Endothelial cell of umbilical vein (primary cell): ENCODE measurements at regions of chr14 and their contacts with region 1.

Region 1: DNA sequence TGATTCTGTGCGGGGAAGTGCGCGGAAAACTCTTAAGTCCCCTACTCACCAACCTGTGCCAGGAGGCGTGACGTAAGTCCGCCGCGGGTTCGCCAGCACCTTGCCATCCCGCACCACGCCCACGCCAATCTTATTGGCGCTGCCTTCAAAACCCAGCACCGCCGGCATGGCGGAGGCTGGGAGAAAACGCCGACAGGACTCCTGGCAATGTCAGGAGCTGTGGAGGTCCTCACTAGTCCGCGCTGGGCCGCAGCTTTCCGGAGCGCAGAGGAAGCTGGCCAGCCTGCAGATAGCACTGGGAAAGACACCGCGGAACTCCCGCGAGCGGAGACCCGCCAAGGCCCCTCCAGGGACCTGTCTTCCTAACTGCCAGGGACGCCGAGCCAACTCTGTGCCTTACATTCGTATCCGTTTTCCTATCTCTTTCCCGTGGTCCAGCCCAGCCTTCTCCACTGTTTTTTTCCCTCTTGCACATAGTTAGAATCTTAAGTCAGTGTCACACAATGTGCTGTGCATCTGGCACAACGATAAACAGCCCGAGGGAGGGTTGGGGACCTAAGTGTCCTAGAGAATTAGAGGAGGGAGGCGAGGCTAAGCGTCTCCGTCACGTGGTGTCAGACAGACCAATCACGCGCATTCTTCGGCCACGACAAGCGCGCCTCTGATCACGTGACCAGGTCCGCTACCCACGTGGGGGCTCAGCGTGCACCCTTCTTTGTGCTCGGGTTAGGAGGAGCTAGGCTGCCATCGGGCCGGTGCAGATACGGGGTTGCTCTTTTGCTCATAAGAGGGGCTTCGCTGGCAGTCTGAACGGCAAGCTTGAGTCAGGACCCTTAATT is at the starts of genes APEX1 and OSGEP:
- DNase-seq: peak; percentile 99
- H3K4me3 ChIP-seq: peak within 1 kb of the TSS; percentile 85 to 99 (median 90)
- H3K27ac ChIP-seq: peak within 1 kb of the TSS; percentile 96
- H3K4me1 ChIP-seq: peaks cover 15% of the 10 kb centered on the region
- H3K27me3 ChIP-seq: no peaks in the 10 kb centered on the region
- CTCF ChIP-seq: no peak
- POLR2A ChIP-seq: peak; percentile 78
- total RNA-seq, gene APEX1: 227 and 231 TPM in 2 replicates
- total RNA-seq, gene OSGEP: 39.1 and 41.8 TPM in 2 replicates

Region 2: DNA sequence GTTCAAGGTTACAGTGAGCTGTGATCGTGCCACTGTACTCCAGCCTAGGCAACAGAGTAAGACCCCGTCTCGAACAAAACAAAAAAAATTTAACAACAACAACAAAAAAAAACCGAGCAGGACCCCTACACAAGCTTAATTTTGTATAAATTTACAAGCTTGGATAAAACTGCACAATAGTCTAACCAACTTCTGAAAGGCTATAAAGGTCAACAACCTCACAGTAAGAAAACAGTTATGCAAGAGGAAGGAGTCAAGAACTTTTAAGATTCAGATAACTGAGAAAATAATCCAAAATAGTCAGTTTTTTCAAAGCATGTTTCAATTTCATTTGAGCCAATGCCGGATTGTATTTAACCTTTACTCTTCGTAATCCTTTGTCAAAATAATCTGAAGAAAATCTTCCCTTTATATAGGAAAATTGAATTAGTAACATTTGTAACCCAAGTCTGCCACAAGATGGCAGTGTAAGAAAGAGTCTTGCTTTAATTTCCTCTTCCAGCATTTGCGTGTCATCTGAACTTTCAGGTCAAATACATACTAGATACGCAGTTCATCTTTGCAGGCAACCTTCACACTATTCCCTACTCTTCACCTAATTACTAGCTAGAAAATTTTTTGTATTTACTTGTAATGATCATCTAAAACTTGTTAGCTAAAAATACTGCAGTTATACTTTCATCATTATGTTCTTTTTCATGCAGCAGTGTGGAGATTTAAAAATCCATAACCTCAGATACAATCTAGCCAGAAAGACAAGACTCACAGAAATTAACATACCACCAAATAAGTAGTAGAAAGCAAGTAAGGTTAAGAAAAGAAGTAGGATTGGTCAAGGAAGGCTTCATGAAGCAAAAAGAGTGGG is 127.5 kb before region 1 on chr14:
- CTCF ChIA-PET with region 1: interaction called, 9 read pairs
- POLR2A ChIA-PET with region 1: no interaction called
- dilution Hi-C with region 1: no loop called
- intact Hi-C with region 1: loop called (anchors 1 kb)
- DNase-seq: peak; percentile 75
- H3K4me3 ChIP-seq: no peak overlapping the region
- H3K27ac ChIP-seq: no peak overlapping the region
- H3K4me1 ChIP-seq: peaks cover 18% of the 10 kb centered on the region
- H3K27me3 ChIP-seq: no peaks in the 10 kb centered on the region
- CTCF ChIP-seq: peak; percentile 42 to 56
- POLR2A ChIP-seq: no peak

Region 3: DNA sequence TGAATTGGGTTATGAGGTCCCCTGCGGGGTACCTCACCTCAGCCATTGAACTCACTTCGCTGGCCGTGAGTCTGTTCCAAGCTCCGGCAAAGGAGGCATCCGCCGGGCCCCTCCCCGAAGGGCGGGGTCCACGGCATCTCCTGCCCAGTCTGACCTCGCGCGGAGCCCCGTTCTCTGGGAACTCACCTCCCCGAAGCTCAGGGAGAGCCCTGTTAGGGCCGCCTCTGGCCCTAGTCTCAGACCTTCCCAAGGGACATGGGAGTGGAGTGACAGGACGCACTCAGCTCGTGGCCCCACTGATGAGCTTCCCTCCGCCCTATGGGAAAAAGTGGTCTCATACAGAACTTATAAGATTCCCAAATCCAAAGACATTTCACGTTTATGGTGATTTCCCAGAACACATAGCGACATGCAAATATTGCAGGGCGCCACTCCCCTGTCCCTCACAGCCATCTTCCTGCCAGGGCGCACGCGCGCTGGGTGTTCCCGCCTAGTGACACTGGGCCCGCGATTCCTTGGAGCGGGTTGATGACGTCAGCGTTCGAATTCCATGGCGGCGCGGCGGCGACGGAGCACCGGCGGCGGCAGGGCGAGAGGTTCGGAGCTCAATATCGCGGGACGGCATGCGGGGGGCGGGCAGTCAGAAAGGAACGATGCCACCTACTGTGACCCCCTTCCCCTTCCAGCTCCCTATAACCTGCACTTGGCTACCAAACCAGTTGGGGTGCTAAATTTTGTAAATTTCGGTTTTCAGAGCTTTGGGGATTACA is 111.5 kb before region 1 on chr14 and contains the start of gene PARP2:
- CTCF ChIA-PET with region 1: interaction called, 5 read pairs
- POLR2A ChIA-PET with region 1: interaction called, 37 read pairs
- dilution Hi-C with region 1: no loop called
- intact Hi-C with region 1: no loop called
- DNase-seq: peak; percentile 100
- H3K4me3 ChIP-seq: peak within 1 kb of the TSS; percentile 78 to 95 (median 78)
- H3K27ac ChIP-seq: peak within 1 kb of the TSS; percentile 85
- H3K4me1 ChIP-seq: peaks cover 11% of the 10 kb centered on the region
- H3K27me3 ChIP-seq: no peaks in the 10 kb centered on the region
- CTCF ChIP-seq: no peak
- POLR2A ChIP-seq: peak; percentile 100
- total RNA-seq, gene PARP2: 30.6 and 30.8 TPM in 2 replicates

Region 4: GRCh38 chr14:20469242-20469889 is 14.6 kb after region 1 on chr14 and contains the start of gene PNP:
- CTCF ChIA-PET with region 1: no interaction called
- POLR2A ChIA-PET with region 1: interaction called, 32 read pairs
- dilution Hi-C with region 1: no loop called
- intact Hi-C with region 1: loop called (anchors 1 kb)
- DNase-seq: peak; percentile 89
- H3K4me3 ChIP-seq: peak within 1 kb of the TSS; percentile 60 to 94 (median 77)
- H3K27ac ChIP-seq: peak within 1 kb of the TSS; percentile 76
- H3K4me1 ChIP-seq: peaks cover 24% of the 10 kb centered on the region
- H3K27me3 ChIP-seq: peaks cover 2 to 6% of the 10 kb centered on the region in 2 experiments
- CTCF ChIP-seq: no peak
- POLR2A ChIP-seq: peak; percentile 99
- total RNA-seq, gene PNP: 189 and 271 TPM in 2 replicates

Region 5: DNA sequence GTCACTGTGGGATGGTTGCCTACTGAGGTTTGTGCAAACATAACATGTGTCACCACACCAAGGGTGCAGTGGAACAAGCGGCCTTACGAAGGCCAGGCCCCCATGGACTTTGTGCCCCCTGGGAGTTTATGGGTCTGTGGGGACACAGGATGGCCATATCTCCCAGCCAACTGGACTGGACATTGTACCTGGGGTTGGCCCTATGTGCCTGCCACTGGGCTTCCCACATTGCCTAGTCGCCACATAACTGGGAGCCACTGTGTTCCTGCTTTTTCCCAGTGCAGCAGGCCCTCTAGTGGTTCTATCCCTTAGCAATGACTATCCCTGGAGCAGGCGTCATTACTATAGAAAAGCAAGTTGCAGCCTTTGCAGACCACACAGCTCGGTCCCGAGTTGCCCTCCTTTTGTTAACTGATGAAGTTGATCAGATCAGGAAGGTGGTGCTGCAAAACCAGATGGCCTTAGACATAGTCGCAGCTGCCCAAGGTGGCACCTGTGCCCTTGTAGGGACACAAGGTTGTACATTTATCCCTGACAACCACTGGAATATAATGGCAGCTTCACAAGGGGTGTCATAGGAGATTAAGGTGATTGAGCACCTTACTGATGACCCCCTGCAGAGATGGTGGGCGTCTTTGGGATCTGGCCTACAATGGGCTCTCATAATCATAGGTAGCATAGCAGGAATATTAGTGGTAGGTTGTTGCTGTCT is 151.6 kb after region 1 on chr14:
- CTCF ChIA-PET with region 1: interaction called, 11 read pairs
- POLR2A ChIA-PET with region 1: interaction called, 4 read pairs
- dilution Hi-C with region 1: no loop called
- intact Hi-C with region 1: loop called (anchors 1 kb)
- DNase-seq: peak; percentile 55
- H3K4me3 ChIP-seq: no peak overlapping the region
- H3K27ac ChIP-seq: no peak overlapping the region
- H3K4me1 ChIP-seq: peaks cover 4% of the 10 kb centered on the region
- H3K27me3 ChIP-seq: peaks cover 0 to 3% of the 10 kb centered on the region in 2 experiments
- CTCF ChIP-seq: peak; percentile 66 to 79
- POLR2A ChIP-seq: no peak